Endothelial cell of umbilical vein (primary cell): ENCODE measurements at regions of chr18 and their contacts with region 1.

Region 1: DNA sequence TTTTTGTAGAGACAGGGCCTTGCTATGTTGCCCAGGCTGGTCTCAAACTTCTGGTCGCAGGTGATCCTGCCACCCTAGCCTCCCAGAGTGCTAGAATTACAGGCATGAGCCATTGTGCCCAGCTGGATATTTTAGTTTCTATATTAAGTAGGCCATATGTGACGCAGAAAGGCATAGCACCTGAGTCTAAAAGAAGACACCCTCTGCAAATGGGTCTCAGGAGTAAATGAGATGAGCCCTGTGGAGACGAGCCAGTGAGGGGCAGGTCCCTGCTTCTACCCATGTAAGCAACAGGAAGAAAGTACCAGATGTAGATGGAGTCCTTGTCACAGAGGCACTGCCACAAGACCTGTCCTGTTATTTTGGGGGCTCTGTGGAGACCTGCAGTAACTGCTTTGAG is 322.4 kb downstream of the PTPRM start:
- DNase-seq: no peak
- H3K4me3 ChIP-seq: no peak overlapping the region
- H3K27ac ChIP-seq: no peak overlapping the region
- H3K4me1 ChIP-seq: no peaks in the 10 kb centered on the region
- H3K27me3 ChIP-seq: no peaks in the 10 kb centered on the region
- CTCF ChIP-seq: no peak
- POLR2A ChIP-seq: no peak

Region 2: DNA sequence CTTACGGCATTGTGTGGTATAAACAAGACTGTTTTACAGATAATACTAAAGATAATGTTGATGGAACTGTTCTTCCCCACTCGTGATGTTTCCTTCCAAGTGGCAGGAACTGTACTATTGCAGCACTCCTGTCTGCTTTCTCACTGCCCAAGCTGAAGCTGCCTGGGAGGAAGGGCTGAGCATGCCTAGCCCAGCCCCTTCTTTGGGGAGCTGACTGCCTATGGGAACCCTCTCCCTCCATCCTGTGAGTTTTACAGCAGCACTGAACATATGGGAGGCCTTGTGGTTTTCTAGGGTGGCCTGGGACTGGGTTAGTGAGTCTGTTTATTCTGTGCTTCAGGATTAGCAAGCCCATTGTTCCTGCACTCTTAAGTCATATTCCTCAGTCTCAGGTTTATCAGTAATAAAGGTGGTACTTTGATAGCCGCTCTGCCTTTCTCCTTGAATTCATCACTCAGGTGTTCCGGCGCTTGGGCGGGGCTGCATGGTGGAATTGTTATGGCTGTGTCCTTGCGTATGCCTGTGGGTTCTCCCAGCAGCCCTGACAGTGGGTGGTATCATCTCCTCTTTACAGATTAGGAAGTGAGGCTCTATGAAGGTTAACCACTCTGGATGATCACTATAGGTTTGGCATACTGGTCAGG is 57.3 kb after region 1 on chr18:
- CTCF ChIA-PET with region 1: no interaction called
- POLR2A ChIA-PET with region 1: no interaction called
- dilution Hi-C with region 1: no loop called
- intact Hi-C with region 1: no loop called
- DNase-seq: peak; percentile 72
- H3K4me3 ChIP-seq: peak overlapping the region in 1 of 3 experiments; percentile 10
- H3K27ac ChIP-seq: peak overlapping the region; percentile 40
- H3K4me1 ChIP-seq: peaks cover 19% of the 10 kb centered on the region
- H3K27me3 ChIP-seq: no peaks in the 10 kb centered on the region
- CTCF ChIP-seq: no peak
- POLR2A ChIP-seq: no peak

Region 3: DNA sequence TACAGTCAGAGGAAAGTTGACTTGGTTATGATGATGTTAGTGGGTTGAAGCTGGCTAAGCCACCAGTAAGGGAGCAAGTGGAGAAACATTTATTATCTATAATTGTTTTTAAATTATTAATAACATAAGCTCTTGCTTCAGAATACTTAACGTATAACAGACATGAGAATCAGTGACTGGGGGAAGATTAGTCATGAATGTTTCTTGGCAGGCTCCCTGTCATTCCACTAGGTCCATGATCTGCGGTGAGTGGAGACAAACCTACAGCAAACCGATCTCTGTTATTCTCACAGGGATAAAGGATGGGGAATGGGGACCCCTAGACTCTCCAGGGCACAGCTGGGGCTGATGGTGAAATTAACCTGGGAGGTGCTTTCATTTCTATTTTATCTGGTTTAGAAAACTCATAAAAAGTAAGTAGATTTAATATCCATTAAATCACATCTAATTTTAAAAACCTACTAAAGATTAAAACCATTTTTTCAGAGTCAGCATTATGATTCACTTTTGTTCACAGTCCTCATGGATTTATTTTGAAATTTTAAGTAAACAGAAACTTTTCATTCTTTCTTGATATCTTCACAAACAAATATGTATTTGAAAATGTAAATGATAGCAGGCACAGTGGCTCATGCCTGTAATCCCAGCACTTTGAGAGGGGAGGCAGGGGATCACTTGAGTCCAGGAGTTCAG is 97.9 kb after region 1 on chr18:
- CTCF ChIA-PET with region 1: no interaction called
- POLR2A ChIA-PET with region 1: interaction called, 10 read pairs
- dilution Hi-C with region 1: no loop called
- intact Hi-C with region 1: no loop called
- DNase-seq: peak; percentile 32
- H3K4me3 ChIP-seq: no peak overlapping the region
- H3K27ac ChIP-seq: no peak overlapping the region
- H3K4me1 ChIP-seq: no peaks in the 10 kb centered on the region
- H3K27me3 ChIP-seq: no peaks in the 10 kb centered on the region
- CTCF ChIP-seq: no peak
- POLR2A ChIP-seq: no peak